ENCODE measurements at regions of chr10 and their contacts with region 1.

Region 1: GRCh38 chr10:70549962-70550458 is 52.5 kb downstream of the PRF1 start:
- DNase-seq: peak in 4 of 5 donors; percentile 67 to 85 (median 76)
- H3K4me3 ChIP-seq: no peak overlapping the region
- H3K27ac ChIP-seq: no peak overlapping the region
- H3K4me1 ChIP-seq: no peaks in the 10 kb centered on the region
- H3K27me3 ChIP-seq: no peaks in the 10 kb centered on the region
- CTCF ChIP-seq: peak; percentile 81

Region 2: DNA sequence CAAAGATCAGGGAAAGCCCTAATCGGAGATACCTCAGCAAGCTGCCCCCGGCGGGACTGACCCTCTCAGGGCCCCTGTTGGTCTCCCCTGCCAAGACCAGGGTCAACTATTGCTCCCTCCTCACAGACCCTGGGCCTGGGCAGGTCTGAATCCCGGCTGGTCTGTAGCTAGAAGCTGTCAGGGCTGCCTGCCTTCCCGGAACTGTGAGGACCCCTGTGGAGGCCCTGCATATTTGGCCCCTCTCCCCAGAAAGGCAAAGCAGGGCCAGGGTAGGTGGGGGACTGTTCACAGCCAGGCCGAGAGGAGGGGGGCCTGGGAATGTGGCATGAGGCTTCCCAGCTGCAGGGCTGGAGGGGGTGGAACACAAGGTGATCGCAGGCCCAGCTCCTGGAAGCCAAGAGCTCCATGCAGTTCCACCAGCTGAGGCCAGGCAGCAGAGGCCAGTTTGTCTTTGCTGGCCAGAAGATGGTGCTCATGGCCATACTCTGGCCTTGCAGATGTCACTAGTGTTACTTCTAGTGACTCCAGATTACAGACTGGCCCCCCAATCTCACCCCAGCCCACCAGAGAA is 211.1 kb after region 1 on chr10:
- intact Hi-C with region 1: loop called (anchors 5 kb)
- DNase-seq: peak; percentile 45 to 73 (median 54)
- H3K4me3 ChIP-seq: no peak overlapping the region
- H3K27ac ChIP-seq: no peak overlapping the region
- H3K4me1 ChIP-seq: peaks cover 0 to 4% (median 0%) of the 10 kb centered on the region in 3 donors
- H3K27me3 ChIP-seq: no peaks in the 10 kb centered on the region
- CTCF ChIP-seq: peak; percentile 28